ENCODE measurements at regions of chr2 and their contacts with region 1.

Region 1: DNA sequence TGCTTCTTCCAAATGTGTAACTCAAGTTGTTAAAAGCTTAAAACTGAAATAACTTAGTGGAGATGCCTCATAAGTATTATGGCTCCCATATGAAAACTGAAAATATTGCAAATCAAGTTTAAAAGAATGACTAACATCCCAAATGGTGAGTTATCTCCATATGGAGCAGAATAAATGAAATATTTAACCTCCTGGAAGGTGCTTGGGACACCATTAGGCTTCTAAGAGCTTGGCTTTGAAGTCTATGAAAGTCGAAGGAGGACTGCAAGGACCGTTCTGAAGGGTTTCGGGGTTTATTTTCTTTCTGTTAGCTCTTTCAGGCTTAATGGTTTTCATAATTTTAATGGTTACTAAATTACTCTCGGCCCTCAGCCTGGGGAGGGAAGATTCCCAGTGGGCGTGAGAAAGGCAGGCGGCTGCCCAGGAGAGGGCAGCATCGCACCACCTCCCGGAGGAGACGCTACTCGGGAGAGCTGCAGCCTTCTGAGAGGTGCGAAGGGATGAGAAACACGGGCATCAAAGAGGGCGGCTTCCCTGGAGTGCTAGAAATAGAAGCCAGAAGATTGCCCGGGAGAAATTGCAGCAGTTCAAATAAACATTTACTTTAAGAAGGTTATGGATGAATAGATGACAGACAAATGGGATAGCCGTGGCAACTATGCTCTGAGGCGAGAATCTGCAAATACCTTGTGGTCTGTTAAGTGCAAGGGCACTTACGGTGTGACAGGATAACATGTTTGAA is 43.1 kb downstream of the MAP3K19 start:
- H3K4me3 Mint-ChIP-seq: no peak overlapping the region
- H3K27ac Mint-ChIP-seq: no peak overlapping the region
- H3K4me1 Mint-ChIP-seq: peaks cover 5% of the 10 kb centered on the region
- H3K27me3 Mint-ChIP-seq: peaks cover 13% of the 10 kb centered on the region

Region 2: DNA sequence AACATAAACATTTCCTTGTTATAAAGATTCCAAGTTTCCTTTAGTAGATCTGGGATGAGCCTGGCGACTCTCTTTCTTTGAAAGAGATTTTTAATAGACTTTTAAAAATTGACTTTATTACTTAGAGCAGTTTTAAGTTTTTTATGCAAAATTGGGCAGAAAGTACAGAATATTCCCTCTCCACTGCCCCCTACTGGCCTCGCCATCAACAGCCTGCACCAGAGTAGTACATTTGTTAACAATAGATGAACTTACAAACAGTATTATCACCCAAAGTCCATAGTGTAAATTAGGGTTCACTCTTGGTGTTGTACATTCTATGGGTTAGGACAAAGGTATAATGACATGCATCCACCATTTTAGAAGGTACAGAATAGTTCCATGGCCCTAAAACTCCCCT is 39.2 kb after region 1 on chr2:
- intact Hi-C with region 1: loop called (anchors 5 kb)
- H3K4me3 Mint-ChIP-seq: no peak overlapping the region
- H3K27ac Mint-ChIP-seq: no peak overlapping the region
- H3K4me1 Mint-ChIP-seq: no peaks in the 10 kb centered on the region
- H3K27me3 Mint-ChIP-seq: peaks cover 5% of the 10 kb centered on the region

Region 3: GRCh38 chr2:135473567-135473966 is 469.4 kb after region 1 on chr2:
- intact Hi-C with region 1: loop called (anchors 10 kb)
- H3K4me3 Mint-ChIP-seq: no peak overlapping the region
- H3K27ac Mint-ChIP-seq: no peak overlapping the region
- H3K4me1 Mint-ChIP-seq: no peaks in the 10 kb centered on the region
- H3K27me3 Mint-ChIP-seq: no peaks in the 10 kb centered on the region

Region 4: GRCh38 chr2:135600915-135601314 is 596.7 kb after region 1 on chr2:
- intact Hi-C with region 1: loop called (anchors 10 kb)
- H3K4me3 Mint-ChIP-seq: no peak overlapping the region
- H3K27ac Mint-ChIP-seq: no peak overlapping the region
- H3K4me1 Mint-ChIP-seq: peaks cover 2% of the 10 kb centered on the region
- H3K27me3 Mint-ChIP-seq: no peaks in the 10 kb centered on the region

Region 5: DNA sequence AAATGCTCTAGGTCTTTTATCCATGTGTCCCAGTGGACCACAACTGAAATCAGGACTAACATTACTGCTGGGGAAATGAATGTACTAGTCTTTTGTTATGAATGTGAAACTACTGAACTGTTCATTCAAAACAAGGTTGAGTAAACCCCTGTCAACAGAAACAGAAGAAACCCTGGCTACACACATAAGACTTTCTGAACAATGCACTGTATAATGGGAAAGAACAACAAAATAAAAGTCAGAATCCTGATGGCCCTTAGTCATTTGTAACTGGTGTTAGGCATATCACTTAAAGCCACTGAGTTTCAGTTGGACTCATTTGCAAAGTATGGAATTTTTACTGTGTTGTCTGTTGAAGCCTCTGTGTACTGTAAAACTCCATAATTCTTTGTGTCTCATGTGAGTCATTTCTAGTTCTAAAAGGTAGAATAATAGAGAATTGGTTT is 660.5 kb after region 1 on chr2:
- intact Hi-C with region 1: no loop called
- H3K4me3 Mint-ChIP-seq: no peak overlapping the region
- H3K27ac Mint-ChIP-seq: no peak overlapping the region
- H3K4me1 Mint-ChIP-seq: peaks cover 14% of the 10 kb centered on the region
- H3K27me3 Mint-ChIP-seq: no peaks in the 10 kb centered on the region

Region 6: DNA sequence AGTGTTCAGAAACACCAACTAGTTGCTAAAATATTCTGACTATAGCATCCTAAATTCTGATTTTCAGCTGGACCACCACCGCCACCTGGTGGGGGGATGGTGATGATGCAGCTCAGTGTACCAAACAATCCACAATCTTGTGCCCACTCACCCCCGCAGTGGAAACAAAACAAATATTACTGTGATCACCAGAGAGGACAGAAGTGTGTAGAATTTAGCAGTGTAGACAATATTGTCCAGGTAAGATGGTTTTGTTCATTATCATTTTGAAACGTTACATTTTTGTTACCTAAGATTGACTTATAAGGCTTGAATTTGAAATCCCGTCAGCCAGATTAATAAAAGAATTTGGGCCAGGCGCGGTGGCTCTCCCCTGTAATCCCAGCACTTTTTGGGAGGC is 705.8 kb after region 1 on chr2:
- intact Hi-C with region 1: loop called (anchors 2 kb)
- H3K4me3 Mint-ChIP-seq: no peak overlapping the region
- H3K27ac Mint-ChIP-seq: no peak overlapping the region
- H3K4me1 Mint-ChIP-seq: no peaks in the 10 kb centered on the region
- H3K27me3 Mint-ChIP-seq: no peaks in the 10 kb centered on the region

Measured in dendritic cell treated with granulocyte-macrophage colony-stimulating factor and Interleukin-4, amounts not matched to agents 40 ng/mL and 50 ng/mL, for 4 days (primary cell).